Mucosa of descending colon (tissue), 3 donors: ENCODE measurements at regions of chr6 and their contacts with region 1.

Region 1: GRCh38 chr6:27078734-27079357 is 168.7 kb upstream of the PRSS16 start:
- DNase-seq: peak in 2 of 3 donors; percentile 55 to 67
- ATAC-seq: peak; percentile 86
- H3K4me3 ChIP-seq: no peak overlapping the region
- H3K4me1 ChIP-seq: no peaks in the 10 kb centered on the region
- CTCF ChIP-seq: peak; percentile 19

Region 2: DNA sequence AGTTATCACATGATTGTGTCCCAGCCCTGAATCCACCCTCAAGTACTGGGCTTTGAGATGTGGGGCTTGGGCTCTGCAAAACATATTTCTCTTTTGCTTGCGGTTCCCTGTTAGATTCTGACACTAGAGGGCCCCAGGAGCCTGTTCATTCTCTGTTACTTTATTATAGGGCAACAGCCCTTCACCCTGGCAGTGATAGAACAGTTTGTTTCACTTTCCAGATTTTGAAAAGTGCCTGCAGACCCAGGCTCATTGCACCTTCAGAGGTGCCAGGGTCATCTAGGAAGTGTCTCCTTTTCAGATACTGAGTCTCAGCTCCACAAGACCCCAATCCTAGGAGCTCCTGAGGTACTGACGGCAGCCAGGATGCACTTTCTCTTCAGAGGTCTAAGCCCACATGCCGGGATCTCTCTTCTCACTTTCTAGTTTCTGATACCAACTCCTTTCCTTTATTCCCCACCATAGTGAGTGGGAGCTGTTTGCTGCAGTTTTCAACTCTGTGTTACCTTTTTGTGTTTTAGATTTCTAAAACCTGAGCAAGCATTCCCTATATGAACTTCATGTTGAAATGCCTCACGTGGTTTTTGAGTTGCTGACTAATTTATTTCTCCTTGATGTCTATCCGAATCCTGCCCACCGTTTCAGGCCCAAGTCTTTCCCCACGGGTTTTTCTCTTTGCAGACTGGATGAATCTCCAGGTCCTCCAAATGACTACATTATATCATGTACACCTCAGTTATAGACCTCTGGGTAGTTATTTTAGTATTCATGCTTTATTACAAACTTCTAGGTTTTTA is 471.2 kb before region 1 on chr6:
- intact Hi-C with region 1: loop called (anchors 2 to 10 kb)
- DNase-seq: peak in 1 of 3 donors; percentile 77
- ATAC-seq: peak; percentile 92
- H3K4me3 ChIP-seq: no peak overlapping the region
- H3K4me1 ChIP-seq: no peaks in the 10 kb centered on the region
- CTCF ChIP-seq: peak; percentile 35

Region 3: DNA sequence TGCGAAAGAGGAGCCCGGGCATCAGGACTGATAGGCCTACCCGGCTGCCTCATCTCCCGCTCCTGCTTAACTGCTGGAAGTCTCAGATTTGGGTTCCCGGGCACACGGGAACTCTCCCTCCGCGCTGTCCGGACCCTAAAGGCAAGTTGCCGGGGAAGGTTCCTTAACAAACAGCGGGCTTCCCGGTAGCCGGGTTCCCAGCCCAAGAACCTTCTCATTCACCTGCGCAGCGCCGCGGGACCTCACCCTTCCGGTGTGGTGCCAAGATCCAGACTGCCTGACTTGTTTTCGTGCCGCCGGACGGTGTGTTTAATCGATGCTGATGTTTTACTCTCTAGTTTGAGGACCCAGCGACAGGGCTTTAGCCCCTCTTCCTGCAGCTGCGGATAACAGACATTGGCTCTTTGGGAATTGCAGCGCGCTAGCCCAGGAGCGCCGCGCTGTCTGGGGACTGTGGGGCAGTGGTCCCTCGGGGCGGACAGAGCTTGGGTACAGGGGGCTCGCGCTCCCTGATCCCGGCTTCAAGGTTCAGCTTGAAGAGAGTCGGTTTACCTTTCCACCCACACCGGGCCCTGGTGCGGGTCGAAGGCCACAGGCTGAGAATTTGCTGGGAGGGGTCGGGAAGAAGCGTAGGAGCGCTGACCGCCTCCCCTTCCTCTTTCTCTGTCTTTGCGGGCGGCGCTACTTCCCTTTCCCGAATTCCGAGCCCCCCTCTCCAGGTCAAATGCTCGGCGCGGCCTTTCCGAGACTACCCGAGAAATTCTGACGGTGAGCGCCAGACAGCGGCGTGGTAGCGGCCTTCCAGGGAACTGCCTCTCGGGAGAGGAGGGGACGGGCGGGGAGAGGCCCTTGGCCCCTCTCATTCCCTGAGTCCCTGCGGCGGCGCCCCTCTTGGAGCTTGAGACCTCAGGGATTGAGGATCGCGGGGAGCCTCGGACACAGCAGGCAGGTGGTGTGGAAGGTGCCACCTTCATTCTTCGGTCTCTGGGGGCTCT is 464.9 kb before region 1 on chr6:
- intact Hi-C with region 1: loop called in 1 of 2 experiments (anchors 10 kb)
- DNase-seq: peak in 2 of 3 donors; percentile 22 to 40
- ATAC-seq: peak; percentile 55
- H3K4me3 ChIP-seq: no peak overlapping the region
- H3K4me1 ChIP-seq: peaks cover 10% of the 10 kb centered on the region
- CTCF ChIP-seq: no peak

Region 4: GRCh38 chr6:27132532-27133280 is 53.9 kb after region 1 on chr6:
- intact Hi-C with region 1: no loop called
- DNase-seq: peak; percentile 88 to 95 (median 90)
- ATAC-seq: peak; percentile 90
- H3K4me3 ChIP-seq: peak overlapping the region; percentile 31
- H3K4me1 ChIP-seq: peaks cover 9% of the 10 kb centered on the region
- CTCF ChIP-seq: peak; percentile 31

Region 5: GRCh38 chr6:27414996-27415395 is 336.1 kb after region 1 on chr6:
- intact Hi-C with region 1: no loop called
- DNase-seq: no peak
- ATAC-seq: no peak
- H3K4me3 ChIP-seq: no peak overlapping the region
- H3K4me1 ChIP-seq: no peaks in the 10 kb centered on the region
- CTCF ChIP-seq: no peak